K562 (cell line): ENCODE measurements at regions of chr1 and their contacts with region 1.

Region 1: GRCh38 chr1:25905680-25906643 is at the start of gene STMN1:
- DNase-seq: peak; percentile 97 to 99 (median 97)
- ATAC-seq: peak; percentile 94
- H3K4me3 ChIP-seq: peak within 1 kb of the TSS; percentile 78
- H3K27ac ChIP-seq: peak within 1 kb of the TSS; percentile 93
- H3K4me1 ChIP-seq: peaks cover 13 to 24% of the 10 kb centered on the region in 2 experiments; a peak in 4 of 5 replicates
- H3K27me3 ChIP-seq: no peaks in the 10 kb centered on the region
- CTCF ChIP-seq: no peak; a peak in 2 of 6 replicates
- EP300 ChIP-seq: peak; percentile 53
- POLR2A ChIP-seq: peak; percentile 97
- RAD21 ChIP-seq: peak in 1 of 2 experiments; percentile 20; a peak in 1 of 4 replicates
- polyA plus RNA-seq, gene STMN1: 2,090 to 2,153 TPM

Region 2: GRCh38 chr1:25922056-25922969 is 16.4 kb after region 1 on chr1:
- CTCF ChIA-PET with region 1: no interaction called
- POLR2A ChIA-PET with region 1: interaction called, 19 read pairs
- in situ Hi-C with region 1: no loop called
- intact Hi-C with region 1: no loop called
- DNase-seq: no peak
- ATAC-seq: no peak
- H3K4me3 ChIP-seq: no peak overlapping the region
- H3K27ac ChIP-seq: peak overlapping the region; percentile 10; the same call in 2 of the 3 replicates
- H3K4me1 ChIP-seq: peaks cover 37 to 42% of the 10 kb centered on the region in 2 experiments
- H3K27me3 ChIP-seq: no peaks in the 10 kb centered on the region
- CTCF ChIP-seq: no peak
- EP300 ChIP-seq: no peak
- POLR2A ChIP-seq: no peak
- RAD21 ChIP-seq: no peak